ENCODE measurements at regions of chr10 and their contacts with region 1.

Region 1: GRCh38 chr10:91220194-91220953 is at the start of gene PCGF5:
- DNase-seq: peak; percentile 97
- H3K4me3 Mint-ChIP-seq: peak within 1 kb of the TSS; percentile 96
- H3K27ac Mint-ChIP-seq: peak within 1 kb of the TSS; percentile 87
- H3K4me1 Mint-ChIP-seq: peaks cover 46% of the 10 kb centered on the region
- H3K27me3 Mint-ChIP-seq: no peaks in the 10 kb centered on the region
- total RNA-seq, gene PCGF5: 42.1 and 45.4 TPM in 2 replicates

Region 2: DNA sequence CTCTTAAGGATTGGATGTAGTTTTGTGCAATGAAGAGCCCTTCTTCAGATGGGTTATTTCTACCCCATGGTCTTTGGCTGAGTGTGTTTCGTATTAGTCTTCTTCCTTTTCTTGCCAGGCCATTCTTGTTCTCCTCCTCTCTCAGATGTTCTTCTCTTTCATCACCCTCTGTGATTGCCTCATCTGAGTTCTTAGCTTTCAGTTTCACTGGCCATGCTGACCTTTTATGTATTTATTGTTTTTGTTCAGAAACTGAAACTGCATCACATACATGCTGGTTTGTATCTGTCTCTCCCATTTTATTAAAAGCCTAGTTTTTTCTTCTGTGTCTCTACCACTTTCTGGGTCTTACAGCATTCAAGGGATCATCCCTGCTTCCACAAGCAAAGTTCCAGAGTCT is 21.6 kb before region 1 on chr10:
- intact Hi-C with region 1: loop called (anchors 1 kb)
- DNase-seq: peak; percentile 84
- H3K4me3 Mint-ChIP-seq: peak overlapping the region; percentile 67
- H3K27ac Mint-ChIP-seq: peak overlapping the region; percentile 78
- H3K4me1 Mint-ChIP-seq: peaks cover 68% of the 10 kb centered on the region
- H3K27me3 Mint-ChIP-seq: no peaks in the 10 kb centered on the region

Region 3: DNA sequence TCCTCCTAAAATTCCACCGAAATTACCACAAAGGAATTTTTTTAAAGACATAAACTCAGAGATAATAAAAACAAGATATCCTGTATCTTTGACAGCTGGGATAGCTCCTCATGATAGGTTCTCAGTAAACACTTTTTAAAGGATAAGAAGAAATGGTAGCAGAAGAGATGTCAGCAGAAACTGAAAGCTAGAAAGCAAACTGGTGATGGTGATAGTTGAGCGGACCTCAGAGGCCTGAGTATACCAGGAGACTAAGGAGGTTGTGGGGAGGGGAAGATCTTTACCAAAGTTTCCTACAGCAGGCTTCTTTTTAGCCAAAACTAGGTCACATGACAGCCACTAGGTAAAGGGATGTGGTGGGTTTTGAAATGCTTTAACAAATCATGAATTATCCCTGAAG is 22.6 kb after region 1 on chr10:
- intact Hi-C with region 1: no loop called
- DNase-seq: no peak
- H3K4me3 Mint-ChIP-seq: no peak overlapping the region
- H3K27ac Mint-ChIP-seq: no peak overlapping the region
- H3K4me1 Mint-ChIP-seq: peaks cover 10% of the 10 kb centered on the region
- H3K27me3 Mint-ChIP-seq: no peaks in the 10 kb centered on the region